K562 (cell line): ENCODE measurements at regions of chr2 and their contacts with region 1.

Region 1: GRCh38 chr2:48600204-48600813 is 17.3 kb upstream of the GTF2A1L start:
- DNase-seq: peak; percentile 20 to 63 (median 28)
- ATAC-seq: peak; percentile 69
- H3K4me3 ChIP-seq: no peak overlapping the region
- H3K27ac ChIP-seq: no peak overlapping the region
- H3K4me1 ChIP-seq: peaks cover 3 to 4% of the 10 kb centered on the region in 2 experiments; a peak in 3 of 5 replicates
- H3K27me3 ChIP-seq: no peaks in the 10 kb centered on the region
- CTCF ChIP-seq: peak; percentile 45 to 87 (median 71); a peak in 5 of 6 replicates
- EP300 ChIP-seq: no peak
- POLR2A ChIP-seq: no peak
- RAD21 ChIP-seq: peak; percentile 87 to 90

Region 2: DNA sequence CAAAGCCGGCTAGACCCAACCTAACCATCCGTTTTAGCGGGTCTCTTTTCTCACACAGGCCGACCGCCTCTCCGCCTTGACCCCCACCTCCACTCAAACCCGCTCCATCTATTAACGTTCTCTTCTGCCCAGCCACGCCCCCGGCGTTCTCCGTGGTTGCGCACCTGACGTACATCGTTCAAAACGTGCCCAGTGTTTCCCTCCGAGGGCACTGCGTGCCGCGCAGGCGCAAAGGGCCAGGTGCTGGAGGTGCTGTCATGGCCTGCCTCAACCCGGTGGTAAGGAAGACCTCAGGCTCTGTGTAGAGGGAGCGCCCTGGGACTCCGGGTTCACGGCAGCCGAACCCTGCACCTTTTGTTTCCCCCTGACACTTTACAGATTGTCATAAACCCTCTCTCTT is 17.3 kb after region 1 on chr2 and contains the start of gene GTF2A1L:
- CTCF ChIA-PET with region 1: no interaction called
- POLR2A ChIA-PET with region 1: no interaction called
- in situ Hi-C with region 1: no loop called
- intact Hi-C with region 1: loop called (anchors 2 kb)
- DNase-seq: no peak
- ATAC-seq: peak; percentile 40; the same call in 2 of the 3 replicates
- H3K4me3 ChIP-seq: no peak within 1 kb of the TSS
- H3K27ac ChIP-seq: no peak within 1 kb of the TSS
- H3K4me1 ChIP-seq: peaks cover 0 to 4% of the 10 kb centered on the region in 2 experiments; a peak in 1 of 5 replicates
- H3K27me3 ChIP-seq: no peaks in the 10 kb centered on the region
- CTCF ChIP-seq: no peak
- EP300 ChIP-seq: no peak
- POLR2A ChIP-seq: no peak
- RAD21 ChIP-seq: no peak
- polyA plus RNA-seq, gene GTF2A1L: 0.06 to 0.35 TPM

Region 3: DNA sequence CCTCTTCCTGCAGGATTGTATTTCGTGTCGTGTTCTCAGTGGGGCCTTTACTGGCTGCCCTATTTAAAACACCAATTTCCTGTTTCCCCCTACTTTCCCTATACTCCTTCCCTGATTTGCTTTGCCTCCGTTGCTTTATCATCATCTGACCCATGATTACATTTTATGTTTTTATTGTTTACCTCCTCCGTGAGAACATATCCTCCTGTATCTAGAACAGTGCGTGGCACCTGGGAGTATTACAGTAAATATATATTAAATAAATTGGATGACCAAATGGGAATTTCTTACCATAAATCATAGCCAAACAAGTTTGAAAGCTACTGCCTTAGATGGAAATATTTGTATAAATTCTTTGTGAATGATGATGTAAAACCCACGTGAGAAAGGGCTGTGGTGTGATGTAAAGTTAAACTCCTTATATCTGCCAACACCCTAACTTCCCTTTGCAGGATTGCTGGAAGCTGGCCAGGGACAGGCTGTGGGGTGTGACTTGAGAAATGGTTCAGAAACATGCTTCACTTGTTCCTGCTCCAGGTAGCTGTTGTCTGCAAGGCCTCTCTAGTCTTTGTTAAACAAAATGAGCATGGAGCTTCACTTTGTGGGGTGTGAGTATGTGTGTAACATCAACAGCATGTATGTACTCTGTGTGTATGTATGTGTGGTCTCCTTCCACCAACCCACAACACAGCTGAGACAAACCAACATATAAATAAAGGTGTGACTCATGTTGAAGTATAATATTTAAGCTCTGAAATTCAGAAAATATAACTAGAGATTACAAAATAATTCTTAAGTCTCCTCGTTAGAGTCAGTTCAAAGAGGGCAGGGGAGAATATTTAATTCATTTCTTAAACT is 115.0 kb after region 1 on chr2:
- CTCF ChIA-PET with region 1: no interaction called
- POLR2A ChIA-PET with region 1: no interaction called
- in situ Hi-C with region 1: no loop called
- intact Hi-C with region 1: no loop called
- DNase-seq: peak in 1 of 4 experiments; percentile 6
- ATAC-seq: no peak; the same call in 2 of the 3 replicates
- H3K4me3 ChIP-seq: no peak overlapping the region
- H3K27ac ChIP-seq: no peak overlapping the region
- H3K4me1 ChIP-seq: peaks cover 0 to 24% of the 10 kb centered on the region in 2 experiments; a peak in 2 of 5 replicates
- H3K27me3 ChIP-seq: no peaks in the 10 kb centered on the region
- CTCF ChIP-seq: no peak
- EP300 ChIP-seq: no peak
- POLR2A ChIP-seq: no peak
- RAD21 ChIP-seq: no peak

Region 4: GRCh38 chr2:48725696-48726494 is 125.6 kb after region 1 on chr2:
- CTCF ChIA-PET with region 1: interaction called, 4 read pairs
- POLR2A ChIA-PET with region 1: interaction called, 3 read pairs
- in situ Hi-C with region 1: no loop called
- intact Hi-C with region 1: loop called (anchors 1 kb)
- DNase-seq: peak in 2 of 4 experiments; percentile 25 to 38
- ATAC-seq: peak; percentile 88
- H3K4me3 ChIP-seq: no peak overlapping the region
- H3K27ac ChIP-seq: no peak overlapping the region
- H3K4me1 ChIP-seq: peaks cover 0 to 3% of the 10 kb centered on the region in 2 experiments; a peak in 1 of 5 replicates
- H3K27me3 ChIP-seq: no peaks in the 10 kb centered on the region
- CTCF ChIP-seq: peak; percentile 48 to 83 (median 53)
- EP300 ChIP-seq: no peak
- POLR2A ChIP-seq: no peak
- RAD21 ChIP-seq: peak; percentile 66 to 83

Region 5: DNA sequence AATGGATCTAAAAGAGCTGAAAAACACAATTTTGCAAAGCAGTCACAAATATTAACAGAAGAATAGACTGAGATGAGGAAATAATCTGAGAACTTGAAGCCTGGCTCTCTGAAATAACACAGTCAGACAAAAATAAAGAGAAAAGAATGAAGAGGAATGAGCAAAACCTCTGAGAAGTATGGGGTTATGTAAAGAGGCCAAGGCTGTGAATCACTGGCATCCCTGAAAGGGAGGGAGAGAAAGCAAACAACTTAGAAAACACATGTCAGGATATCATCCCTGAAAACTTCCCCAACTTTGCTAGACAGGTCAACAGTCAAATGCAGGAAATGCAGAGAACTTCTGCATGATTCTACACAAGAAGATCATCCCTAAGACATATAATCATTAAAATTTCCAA is 228.7 kb after region 1 on chr2:
- CTCF ChIA-PET with region 1: interaction called, 5 read pairs
- POLR2A ChIA-PET with region 1: no interaction called
- in situ Hi-C with region 1: no loop called
- intact Hi-C with region 1: loop called (anchors 10 kb)
- DNase-seq: no peak
- ATAC-seq: no peak
- H3K4me3 ChIP-seq: no peak overlapping the region
- H3K27ac ChIP-seq: no peak overlapping the region
- H3K4me1 ChIP-seq: no peaks in the 10 kb centered on the region
- H3K27me3 ChIP-seq: no peaks in the 10 kb centered on the region
- CTCF ChIP-seq: no peak
- EP300 ChIP-seq: no peak
- POLR2A ChIP-seq: no peak
- RAD21 ChIP-seq: no peak

Region 6: GRCh38 chr2:48946449-48947048 is 346.2 kb after region 1 on chr2:
- CTCF ChIA-PET with region 1: interaction called, 3 read pairs
- POLR2A ChIA-PET with region 1: no interaction called
- in situ Hi-C with region 1: no loop called
- intact Hi-C with region 1: loop called (anchors 5 kb)
- DNase-seq: peak; percentile 54 to 77 (median 68)
- ATAC-seq: peak; percentile 93
- H3K4me3 ChIP-seq: no peak overlapping the region
- H3K27ac ChIP-seq: no peak overlapping the region
- H3K4me1 ChIP-seq: no peaks in the 10 kb centered on the region
- H3K27me3 ChIP-seq: no peaks in the 10 kb centered on the region
- CTCF ChIP-seq: peak; percentile 64 to 79 (median 78)
- EP300 ChIP-seq: no peak
- POLR2A ChIP-seq: no peak
- RAD21 ChIP-seq: peak; percentile 87 to 89

Region 7: DNA sequence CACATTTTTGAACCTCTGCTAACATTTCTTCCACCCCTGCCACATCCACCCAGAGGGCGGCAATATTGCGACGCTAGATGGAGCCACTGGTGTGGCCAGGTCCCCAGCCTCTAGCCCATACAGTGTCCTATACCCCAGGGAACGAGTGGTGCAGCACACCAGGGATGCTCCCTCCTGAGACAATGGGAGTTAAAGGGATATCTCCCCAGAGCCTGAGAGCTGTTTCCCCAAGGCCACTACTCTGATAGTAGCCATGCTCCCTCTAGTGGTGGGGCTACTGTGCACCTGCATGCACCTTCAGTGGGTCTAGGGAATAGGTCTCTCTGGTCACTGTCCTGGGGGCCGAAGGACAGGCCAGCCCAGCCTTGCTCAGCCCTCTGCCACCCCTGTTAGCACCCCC is 890.4 kb after region 1 on chr2:
- CTCF ChIA-PET with region 1: no interaction called
- POLR2A ChIA-PET with region 1: no interaction called
- in situ Hi-C with region 1: no loop called
- intact Hi-C with region 1: loop called (anchors 5 kb)
- DNase-seq: peak; percentile 7 to 20 (median 8)
- ATAC-seq: no peak
- H3K4me3 ChIP-seq: no peak overlapping the region
- H3K27ac ChIP-seq: no peak overlapping the region
- H3K4me1 ChIP-seq: no peaks in the 10 kb centered on the region
- H3K27me3 ChIP-seq: no peaks in the 10 kb centered on the region
- CTCF ChIP-seq: peak; percentile 9 to 38 (median 38); a peak in 3 of 6 replicates
- EP300 ChIP-seq: no peak
- POLR2A ChIP-seq: no peak
- RAD21 ChIP-seq: 0 out of 4 replicates have a peak, but pooled peaks of 1 of the 2 experiments have one; percentile 7

Region 8: GRCh38 chr2:50492477-50492851 is 1892.2 kb after region 1 on chr2:
- CTCF ChIA-PET with region 1: interaction called, 3 read pairs
- POLR2A ChIA-PET with region 1: no interaction called
- in situ Hi-C with region 1: loop called (anchors 25 kb)
- intact Hi-C with region 1: loop called (anchors 1 kb)
- DNase-seq: peak; percentile 52 to 62 (median 58)
- ATAC-seq: peak; percentile 92
- H3K4me3 ChIP-seq: no peak overlapping the region
- H3K27ac ChIP-seq: no peak overlapping the region
- H3K4me1 ChIP-seq: no peaks in the 10 kb centered on the region
- H3K27me3 ChIP-seq: no peaks in the 10 kb centered on the region
- CTCF ChIP-seq: peak; percentile 29 to 72 (median 60); a peak in 5 of 6 replicates
- EP300 ChIP-seq: no peak
- POLR2A ChIP-seq: no peak
- RAD21 ChIP-seq: peak; percentile 62 to 70